Caco-2 (cell line): ENCODE measurements at regions of chr6 and their contacts with region 1.

Region 1: DNA sequence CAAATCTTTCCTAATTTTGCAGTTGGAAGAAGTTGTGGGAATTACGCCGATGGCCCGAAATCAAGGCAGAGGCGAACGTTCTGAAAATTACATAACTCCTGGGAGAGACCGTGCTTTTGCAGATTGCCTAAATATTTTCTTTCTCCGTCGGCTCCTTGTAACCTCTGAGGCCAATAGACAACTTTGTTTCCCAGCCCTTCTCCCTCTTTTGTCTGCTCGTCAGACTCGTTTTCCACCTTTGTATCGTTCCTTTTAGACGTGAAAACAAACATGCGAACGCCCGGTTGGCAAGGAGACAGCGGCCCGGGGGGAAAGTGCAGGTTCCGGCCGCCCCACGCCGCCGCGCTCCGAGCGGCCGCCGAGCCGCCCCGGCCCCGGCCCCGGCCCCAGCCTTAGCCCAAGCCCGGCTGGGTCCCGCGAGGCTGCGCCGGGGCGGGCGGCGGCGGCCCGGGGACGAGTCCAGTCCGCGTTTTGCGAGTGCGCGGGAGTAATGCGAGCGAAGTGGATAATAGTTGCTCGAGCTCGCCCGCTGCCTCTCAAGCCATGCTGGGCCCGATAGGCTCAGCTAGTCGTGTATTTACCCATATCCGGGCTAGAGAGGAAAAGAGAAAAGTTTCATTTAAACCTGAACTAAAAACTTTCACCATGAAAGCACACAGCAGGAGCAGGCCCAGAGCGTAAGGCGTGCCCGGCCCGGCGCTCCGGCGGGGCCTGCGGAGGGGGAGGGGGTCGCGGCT is at the start of gene ARID1B:
- DNase-seq: peak; percentile 73 to 83
- H3K4me3 ChIP-seq: peak within 1 kb of the TSS; percentile 88
- H3K4me3 Mint-ChIP-seq: peak within 1 kb of the TSS; percentile 92
- H3K27ac Mint-ChIP-seq: peak within 1 kb of the TSS; percentile 90
- H3K4me1 ChIP-seq: peaks cover 16% of the 10 kb centered on the region
- H3K4me1 Mint-ChIP-seq: no peaks in the 10 kb centered on the region
- H3K27me3 ChIP-seq: no peaks in the 10 kb centered on the region
- H3K27me3 Mint-ChIP-seq: no peaks in the 10 kb centered on the region
- CTCF ChIP-seq: no peak
- total RNA-seq, gene ARID1B: 58.8 and 62.2 TPM in 2 replicates

Region 2: GRCh38 chr6:156197513-156197912 is 579.5 kb before region 1 on chr6:
- CTCF ChIA-PET with region 1: no interaction called
- POLR2A ChIA-PET with region 1: no interaction called
- intact Hi-C with region 1: no loop called
- DNase-seq: no peak
- H3K4me3 ChIP-seq: no peak overlapping the region
- H3K4me3 Mint-ChIP-seq: no peak overlapping the region
- H3K27ac Mint-ChIP-seq: no peak overlapping the region
- H3K4me1 ChIP-seq: no peaks in the 10 kb centered on the region
- H3K4me1 Mint-ChIP-seq: no peaks in the 10 kb centered on the region
- H3K27me3 ChIP-seq: no peaks in the 10 kb centered on the region
- H3K27me3 Mint-ChIP-seq: no peaks in the 10 kb centered on the region
- CTCF ChIP-seq: no peak

Region 3: DNA sequence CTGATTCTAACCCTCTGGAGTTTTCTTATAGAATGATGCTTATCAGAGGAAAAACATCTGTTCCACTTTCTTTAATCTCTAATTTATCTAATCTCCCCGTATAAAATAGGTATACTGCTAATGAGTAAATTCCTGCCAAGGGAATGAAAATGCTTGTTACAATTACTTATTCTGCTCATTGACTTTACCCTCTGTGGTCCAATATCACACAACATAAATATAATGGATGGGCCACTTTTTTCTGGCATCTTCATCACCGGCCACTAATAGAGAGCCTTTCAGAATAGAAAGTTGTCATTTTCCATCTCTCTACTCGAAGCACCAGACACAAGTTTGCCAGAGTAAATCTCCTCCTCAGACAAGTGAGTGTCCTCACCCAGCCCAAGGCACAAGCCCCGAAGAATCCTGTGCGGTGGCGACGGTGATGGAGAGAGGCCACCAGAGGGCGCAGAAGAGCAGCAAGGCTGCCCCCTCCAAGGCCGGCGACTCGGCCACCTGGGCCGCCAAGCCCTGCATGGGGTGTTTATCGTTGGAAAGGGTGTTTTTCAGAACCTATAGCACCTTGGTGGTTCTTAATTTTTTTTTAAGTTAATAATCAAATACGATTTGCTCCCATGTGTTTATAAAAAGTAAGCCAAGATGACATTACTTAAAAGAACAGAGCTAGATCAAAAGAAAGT is 212.7 kb before region 1 on chr6:
- CTCF ChIA-PET with region 1: no interaction called
- POLR2A ChIA-PET with region 1: no interaction called
- intact Hi-C with region 1: loop called (anchors 5 kb)
- DNase-seq: peak; percentile 45 to 73
- H3K4me3 ChIP-seq: no peak overlapping the region
- H3K4me3 Mint-ChIP-seq: no peak overlapping the region
- H3K27ac Mint-ChIP-seq: no peak overlapping the region
- H3K4me1 ChIP-seq: 0 out of 2 replicates have a peak, but pooled peaks cover 3% of the 10 kb centered on the region
- H3K4me1 Mint-ChIP-seq: no peaks in the 10 kb centered on the region
- H3K27me3 ChIP-seq: no peaks in the 10 kb centered on the region
- H3K27me3 Mint-ChIP-seq: peaks cover 9% of the 10 kb centered on the region
- CTCF ChIP-seq: peak; percentile 88

Region 4: DNA sequence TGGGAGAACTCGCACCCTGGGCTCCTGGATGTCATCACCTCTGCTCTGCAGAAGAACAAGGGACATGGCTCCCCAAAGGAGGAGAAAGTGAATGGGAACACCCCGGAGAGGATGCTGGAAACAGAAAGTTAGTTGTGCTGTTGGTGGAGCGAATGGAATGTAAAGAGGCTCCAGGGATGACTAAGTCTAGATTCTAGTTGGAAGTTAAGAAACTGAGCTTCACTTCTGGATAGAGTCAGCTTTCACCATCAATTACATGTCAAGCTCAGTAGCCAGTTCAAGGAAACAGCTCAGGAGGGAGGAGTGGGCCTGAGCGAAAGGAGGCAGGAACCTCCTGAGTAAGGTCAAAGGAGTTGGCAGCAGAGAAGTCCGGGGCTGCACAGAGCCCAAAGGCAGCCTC is 131.9 kb before region 1 on chr6:
- CTCF ChIA-PET with region 1: no interaction called
- POLR2A ChIA-PET with region 1: no interaction called
- intact Hi-C with region 1: no loop called
- DNase-seq: no peak
- H3K4me3 ChIP-seq: no peak overlapping the region
- H3K4me3 Mint-ChIP-seq: no peak overlapping the region
- H3K27ac Mint-ChIP-seq: no peak overlapping the region
- H3K4me1 ChIP-seq: no peaks in the 10 kb centered on the region
- H3K4me1 Mint-ChIP-seq: no peaks in the 10 kb centered on the region
- H3K27me3 ChIP-seq: no peaks in the 10 kb centered on the region
- H3K27me3 Mint-ChIP-seq: peaks cover 9% of the 10 kb centered on the region
- CTCF ChIP-seq: no peak

Region 5: GRCh38 chr6:156719720-156720563 is 57.1 kb before region 1 on chr6:
- CTCF ChIA-PET with region 1: no interaction called
- POLR2A ChIA-PET with region 1: interaction called, 3 read pairs
- intact Hi-C with region 1: loop called (anchors 2 kb)
- DNase-seq: peak; percentile 96
- H3K4me3 ChIP-seq: peak overlapping the region; percentile 49
- H3K4me3 Mint-ChIP-seq: peak overlapping the region; percentile 94
- H3K27ac Mint-ChIP-seq: peak overlapping the region; percentile 98
- H3K4me1 ChIP-seq: peaks cover 18% of the 10 kb centered on the region
- H3K4me1 Mint-ChIP-seq: peaks cover 19% of the 10 kb centered on the region
- H3K27me3 ChIP-seq: no peaks in the 10 kb centered on the region
- H3K27me3 Mint-ChIP-seq: no peaks in the 10 kb centered on the region
- CTCF ChIP-seq: no peak

Region 6: DNA sequence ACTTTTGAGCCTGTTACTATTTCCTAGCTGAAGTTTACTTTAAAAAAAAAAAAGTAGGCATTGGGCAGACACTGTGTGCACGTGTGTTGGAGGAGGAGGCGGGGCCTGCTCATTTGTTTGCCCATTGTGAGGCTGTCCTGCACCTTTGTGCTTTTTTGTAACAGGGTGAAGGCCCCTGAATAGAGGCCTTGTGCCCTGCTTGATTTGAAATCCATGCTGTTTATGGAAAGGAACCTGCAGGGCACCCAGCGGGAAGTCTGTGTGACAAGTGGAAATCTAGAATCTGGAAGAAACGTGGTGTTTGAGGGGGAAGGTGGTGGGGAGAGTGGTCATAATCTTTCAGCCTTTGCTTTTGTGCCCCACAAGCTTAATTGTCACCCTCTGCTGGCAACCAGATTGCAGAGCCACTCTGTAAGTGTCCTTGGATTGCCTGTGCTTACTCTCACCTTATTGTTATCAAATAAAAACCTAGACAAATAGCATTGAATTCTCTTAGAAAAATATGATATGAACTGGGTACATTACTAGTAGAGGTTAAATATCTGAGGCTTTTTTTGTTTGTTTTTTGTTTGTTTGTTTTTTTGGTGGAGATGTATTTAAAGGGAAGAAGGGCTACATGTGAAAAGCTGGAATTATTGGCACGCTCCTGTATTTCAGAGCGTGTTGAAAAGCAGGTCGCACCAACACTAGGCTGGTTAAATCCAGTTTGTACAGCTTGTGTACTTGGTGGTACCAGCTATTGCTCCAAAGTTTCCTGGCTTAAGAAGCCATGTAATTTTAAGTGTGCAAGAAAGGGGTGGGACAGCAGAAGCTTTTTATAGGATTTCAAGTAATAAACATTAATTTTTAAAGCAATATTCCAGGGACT is 156.4 kb after region 1 on chr6:
- CTCF ChIA-PET with region 1: no interaction called
- POLR2A ChIA-PET with region 1: no interaction called
- intact Hi-C with region 1: loop called (anchors 5 kb)
- DNase-seq: peak; percentile 51 to 57
- H3K4me3 ChIP-seq: no peak overlapping the region
- H3K4me3 Mint-ChIP-seq: peak overlapping the region; percentile 31
- H3K27ac Mint-ChIP-seq: peak overlapping the region; percentile 14
- H3K4me1 ChIP-seq: peaks cover 20% of the 10 kb centered on the region
- H3K4me1 Mint-ChIP-seq: no peaks in the 10 kb centered on the region
- H3K27me3 ChIP-seq: no peaks in the 10 kb centered on the region
- H3K27me3 Mint-ChIP-seq: no peaks in the 10 kb centered on the region
- CTCF ChIP-seq: peak in 1 of 2 experiments; percentile 30

Region 7: DNA sequence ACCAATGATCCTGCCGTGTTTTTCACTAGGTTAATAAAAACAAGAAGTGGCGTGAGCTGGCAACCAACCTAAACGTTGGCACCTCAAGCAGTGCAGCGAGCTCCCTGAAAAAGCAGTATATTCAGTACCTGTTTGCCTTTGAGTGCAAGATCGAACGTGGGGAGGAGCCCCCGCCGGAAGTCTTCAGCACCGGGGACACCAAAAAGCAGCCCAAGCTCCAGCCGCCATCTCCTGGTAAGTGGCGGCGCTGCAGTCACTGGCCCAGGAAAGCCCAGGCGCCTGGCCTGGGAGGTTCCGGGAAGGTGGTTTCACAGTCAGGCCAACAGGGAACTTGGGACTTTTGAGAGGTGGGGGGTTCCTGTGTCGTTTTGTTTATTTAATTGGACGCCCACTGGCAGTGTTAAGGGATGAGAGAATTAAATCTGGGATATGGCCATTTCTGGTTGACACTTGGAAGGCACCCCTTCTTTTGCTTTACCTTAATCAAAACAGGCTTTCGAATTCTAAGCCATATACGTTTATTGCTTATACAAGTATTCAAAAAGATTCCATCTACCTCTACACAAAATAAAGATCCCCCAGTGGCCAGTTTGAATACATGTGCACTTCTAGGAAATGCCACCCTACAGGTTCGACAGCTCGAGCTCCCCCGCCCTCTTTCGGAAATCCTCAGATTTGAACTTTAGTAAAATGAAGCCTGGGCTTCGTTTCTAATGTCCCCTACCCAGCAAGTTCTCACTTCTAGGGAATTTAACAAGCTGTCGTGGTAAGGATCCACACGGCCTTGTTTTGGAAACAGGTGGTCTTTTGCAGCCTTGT is 407.4 kb after region 1 on chr6:
- CTCF ChIA-PET with region 1: no interaction called
- POLR2A ChIA-PET with region 1: no interaction called
- intact Hi-C with region 1: loop called (anchors 10 kb)
- DNase-seq: peak; percentile 57 to 78
- H3K4me3 ChIP-seq: no peak overlapping the region
- H3K4me3 Mint-ChIP-seq: no peak overlapping the region
- H3K27ac Mint-ChIP-seq: no peak overlapping the region
- H3K4me1 ChIP-seq: peaks cover 10% of the 10 kb centered on the region
- H3K4me1 Mint-ChIP-seq: peaks cover 12% of the 10 kb centered on the region
- H3K27me3 ChIP-seq: no peaks in the 10 kb centered on the region
- H3K27me3 Mint-ChIP-seq: no peaks in the 10 kb centered on the region
- CTCF ChIP-seq: peak; percentile 85 to 89